Activated T-helper 2 cell treated with anti-CD3 and anti-CD28 coated beads, Interferon-gamma antibody, Interleukin-2, Interleukin-4, amounts not matched to agents 10 μg/mL and 5 μg/mL and 100 μg/mL, durations not matched to agents 14 hours and 24 hours and 36 hours (primary cell): ENCODE measurements at regions of chr11 and their contacts with region 1.

Region 1: DNA sequence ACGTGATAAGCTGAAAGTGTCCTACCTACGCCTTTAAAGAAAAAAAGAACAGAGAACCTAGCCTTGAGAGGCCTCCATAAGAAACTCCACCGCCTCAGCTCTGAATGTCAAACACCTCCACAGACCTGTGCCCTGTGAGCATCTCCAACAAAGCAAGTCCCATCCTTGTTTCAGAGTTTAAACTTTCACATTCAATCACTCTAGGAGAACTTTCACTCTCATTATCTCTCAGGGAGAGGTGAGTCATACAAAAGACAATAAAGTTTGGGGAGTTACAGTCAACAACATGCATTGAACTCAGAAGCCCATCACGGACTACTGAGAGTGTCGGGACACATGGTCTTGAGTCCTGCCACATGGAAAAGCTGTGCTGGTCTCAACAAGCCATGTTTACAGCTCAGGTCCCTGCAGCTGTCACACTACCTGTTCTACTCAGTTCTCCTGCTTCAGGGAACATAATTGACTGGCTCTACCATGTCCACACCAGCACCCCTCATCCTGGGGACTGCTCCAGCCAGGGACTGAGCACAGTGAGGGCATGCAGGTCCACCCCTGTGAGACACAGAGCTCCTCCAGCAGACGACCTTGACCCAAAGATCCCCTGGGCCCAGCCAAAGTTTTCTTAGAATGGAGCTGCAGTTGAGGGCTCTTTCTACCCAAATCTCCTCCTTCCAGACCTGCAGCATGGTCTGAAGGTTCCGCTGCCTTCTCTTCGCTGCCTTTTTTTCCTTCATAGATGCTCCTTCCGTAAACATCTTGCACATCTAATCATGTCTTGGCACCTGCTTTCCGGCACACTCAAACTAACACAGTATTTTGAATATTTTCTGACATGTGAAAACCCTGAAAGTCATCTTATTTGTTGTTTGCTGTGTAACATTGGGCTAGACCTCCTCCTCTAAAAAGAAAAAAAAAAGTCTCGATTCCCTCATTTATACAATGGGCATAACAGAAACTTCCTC is 114.9 kb downstream of the ETS1 start:
- DNase-seq: peak; percentile 62
- H3K4me3 Mint-ChIP-seq: peak overlapping the region; percentile 75
- H3K27ac Mint-ChIP-seq: peak overlapping the region; percentile 95
- H3K4me1 Mint-ChIP-seq: peaks cover 94% of the 10 kb centered on the region
- H3K27me3 Mint-ChIP-seq: no peaks in the 10 kb centered on the region

Region 2: DNA sequence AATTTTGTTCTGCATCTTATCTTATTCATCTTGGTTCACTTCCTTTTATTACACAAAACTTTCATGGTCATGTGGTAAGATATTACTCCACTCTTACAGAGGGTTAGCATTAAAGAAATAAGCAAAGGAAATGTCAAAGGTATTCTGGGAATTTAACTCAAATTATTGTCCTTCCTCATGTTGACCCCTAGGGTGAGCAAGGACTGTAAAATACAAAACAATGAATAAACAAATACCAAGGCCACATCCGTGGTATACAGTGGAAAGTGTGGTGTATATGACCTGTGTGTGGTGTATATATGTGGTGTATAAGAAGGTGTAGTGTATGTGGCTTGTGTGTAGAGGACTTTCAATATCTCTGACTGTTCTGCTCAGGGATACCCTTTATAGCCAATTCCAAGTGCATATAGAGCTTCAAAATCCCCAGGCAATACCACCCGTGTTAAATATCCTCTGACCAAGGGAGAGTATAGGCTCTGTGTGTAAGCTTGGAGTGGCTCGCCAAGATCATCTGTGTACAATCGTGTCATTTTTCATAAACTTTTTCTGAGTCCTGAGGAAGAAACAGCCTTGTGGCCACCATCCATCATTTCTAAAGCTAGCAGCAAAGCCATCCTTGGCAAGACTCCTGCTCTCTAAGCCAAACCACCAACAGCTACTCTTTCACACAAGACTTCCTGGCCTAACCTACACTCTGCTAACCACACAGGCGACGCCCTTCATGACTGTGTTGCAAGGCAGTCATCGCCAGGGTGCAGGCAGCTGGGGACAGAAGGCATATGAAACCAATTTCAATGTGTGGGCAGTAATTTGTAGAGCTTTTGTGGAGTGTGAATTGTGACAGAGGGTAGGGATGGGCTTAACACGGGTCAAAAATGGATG is 433.0 kb before region 1 on chr11:
- intact Hi-C with region 1: loop called (anchors 5 kb)
- DNase-seq: peak; percentile 80
- H3K4me3 Mint-ChIP-seq: peak overlapping the region; percentile 35
- H3K27ac Mint-ChIP-seq: peak overlapping the region; percentile 91
- H3K4me1 Mint-ChIP-seq: peaks cover 46% of the 10 kb centered on the region
- H3K27me3 Mint-ChIP-seq: no peaks in the 10 kb centered on the region

Region 3: GRCh38 chr11:128232588-128232987 is 239.8 kb before region 1 on chr11:
- intact Hi-C with region 1: loop called (anchors 1 kb)
- DNase-seq: no peak
- H3K4me3 Mint-ChIP-seq: no peak overlapping the region
- H3K27ac Mint-ChIP-seq: peak overlapping the region; percentile 81
- H3K4me1 Mint-ChIP-seq: peaks cover 58% of the 10 kb centered on the region
- H3K27me3 Mint-ChIP-seq: no peaks in the 10 kb centered on the region

Region 4: DNA sequence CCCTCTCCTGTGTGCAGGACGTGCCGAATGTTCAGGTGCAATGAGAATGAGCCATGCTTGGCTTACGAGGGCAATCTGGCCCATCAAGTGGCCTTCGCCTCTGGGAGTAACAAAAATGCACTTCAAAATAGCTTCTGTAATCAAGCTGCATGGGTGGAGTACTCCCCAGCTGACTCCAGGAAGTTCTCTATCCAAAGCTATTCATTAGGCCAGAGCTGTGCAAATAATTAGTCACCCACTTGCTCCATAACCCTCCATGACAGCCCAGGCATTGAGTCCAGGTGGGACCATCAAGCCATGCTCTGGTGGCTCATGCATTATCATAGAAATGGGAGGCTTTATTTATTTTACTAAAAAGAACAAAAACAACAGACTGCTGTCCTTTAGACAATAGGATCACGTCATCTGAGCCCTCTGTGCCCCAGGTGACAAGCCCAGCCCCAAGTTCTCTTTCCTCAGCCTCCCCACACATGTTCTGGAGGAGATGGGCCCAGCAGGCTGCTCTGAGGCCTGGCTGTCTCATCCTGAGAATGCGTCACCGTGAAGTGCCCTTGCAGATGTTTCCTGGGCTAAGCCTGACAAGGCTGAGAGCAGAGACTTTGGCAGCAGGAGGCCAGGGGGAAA is 129.8 kb before region 1 on chr11:
- intact Hi-C with region 1: loop called (anchors 1 kb)
- DNase-seq: peak; percentile 55
- H3K4me3 Mint-ChIP-seq: peak overlapping the region; percentile 7
- H3K27ac Mint-ChIP-seq: peak overlapping the region; percentile 81
- H3K4me1 Mint-ChIP-seq: peaks cover 73% of the 10 kb centered on the region
- H3K27me3 Mint-ChIP-seq: no peaks in the 10 kb centered on the region

Region 5: GRCh38 chr11:128506999-128507611 is 34.7 kb after region 1 on chr11:
- intact Hi-C with region 1: loop called (anchors 5 kb)
- DNase-seq: no peak
- H3K4me3 Mint-ChIP-seq: peak overlapping the region; percentile 79
- H3K27ac Mint-ChIP-seq: peak overlapping the region; percentile 96
- H3K4me1 Mint-ChIP-seq: peaks cover 96% of the 10 kb centered on the region
- H3K27me3 Mint-ChIP-seq: no peaks in the 10 kb centered on the region

Region 6: GRCh38 chr11:128630367-128631230 is 158.2 kb after region 1 on chr11:
- intact Hi-C with region 1: loop called (anchors 1 kb)
- DNase-seq: peak; percentile 81
- H3K4me3 Mint-ChIP-seq: peak overlapping the region; percentile 28
- H3K27ac Mint-ChIP-seq: peak overlapping the region; percentile 97
- H3K4me1 Mint-ChIP-seq: peaks cover 59% of the 10 kb centered on the region
- H3K27me3 Mint-ChIP-seq: no peaks in the 10 kb centered on the region